H1 (cell line): ENCODE measurements at regions of chr3 and their contacts with region 1.

Region 1: DNA sequence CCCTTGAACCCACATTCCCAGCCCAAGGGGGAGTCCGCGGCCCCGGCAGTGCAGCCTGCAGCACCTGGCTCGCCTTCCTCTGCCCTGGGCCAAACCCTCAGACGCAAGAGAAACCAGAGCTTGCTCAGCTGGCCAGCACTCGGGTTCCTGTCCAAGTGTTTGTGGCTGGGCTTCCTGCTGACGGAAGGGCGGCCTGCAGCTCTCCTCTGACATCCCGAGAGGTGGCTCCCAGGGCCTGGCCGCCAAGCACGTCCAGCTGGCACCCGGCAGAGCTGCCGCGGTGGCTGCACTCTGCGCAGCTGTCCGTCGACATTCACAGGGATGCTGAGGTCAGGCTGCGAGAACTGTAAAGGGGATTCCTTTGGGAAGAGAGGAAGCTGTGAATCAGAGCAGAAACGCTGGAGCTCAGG is 85.6 kb downstream of the CPN2 start:
- DNase-seq: no peak
- H3K4me3 ChIP-seq: no peak overlapping the region
- H3K27ac ChIP-seq: no peak overlapping the region
- H3K4me1 ChIP-seq: peaks cover 0 to 9% (median 4%) of the 10 kb centered on the region in 4 experiments; a peak in 5 of 7 replicates
- H3K27me3 ChIP-seq: peaks cover 0 to 4% (median 1%) of the 10 kb centered on the region in 4 experiments; a peak in 2 of 7 replicates
- CTCF ChIP-seq: no peak
- EP300 ChIP-seq: no peak
- POLR2A ChIP-seq: no peak
- RAD21 ChIP-seq: no peak

Region 2: GRCh38 chr3:193788189-193788991 is 477.1 kb before region 1 on chr3:
- CTCF ChIA-PET with region 1: interaction called, 11 read pairs
- POLR2A ChIA-PET with region 1: no interaction called
- DNase-seq: peak in 1 of 2 experiments; percentile 71
- H3K4me3 ChIP-seq: no peak overlapping the region
- H3K27ac ChIP-seq: no peak overlapping the region
- H3K4me1 ChIP-seq: peaks cover 3 to 12% (median 9%) of the 10 kb centered on the region in 4 experiments
- H3K27me3 ChIP-seq: peaks cover 0 to 6% (median 0%) of the 10 kb centered on the region in 4 experiments; a peak in 2 of 7 replicates
- CTCF ChIP-seq: peak; percentile 85 to 96 (median 87)
- EP300 ChIP-seq: no peak
- POLR2A ChIP-seq: no peak
- RAD21 ChIP-seq: peak; percentile 96 to 99

Region 3: GRCh38 chr3:194166682-194167479 is 98.6 kb before region 1 on chr3:
- CTCF ChIA-PET with region 1: interaction called, 18 read pairs
- POLR2A ChIA-PET with region 1: no interaction called
- DNase-seq: no peak
- H3K4me3 ChIP-seq: no peak overlapping the region
- H3K27ac ChIP-seq: no peak overlapping the region
- H3K4me1 ChIP-seq: peaks cover 0 to 16% (median 4%) of the 10 kb centered on the region in 4 experiments; a peak in 4 of 7 replicates
- H3K27me3 ChIP-seq: no peaks in the 10 kb centered on the region; a peak in 1 of 7 replicates
- CTCF ChIP-seq: no peak
- EP300 ChIP-seq: no peak
- POLR2A ChIP-seq: no peak
- RAD21 ChIP-seq: no peak

Region 4: GRCh38 chr3:194194051-194194756 is 71.3 kb before region 1 on chr3:
- CTCF ChIA-PET with region 1: no interaction called
- POLR2A ChIA-PET with region 1: no interaction called
- DNase-seq: no peak
- H3K4me3 ChIP-seq: no peak overlapping the region
- H3K27ac ChIP-seq: no peak overlapping the region
- H3K4me1 ChIP-seq: no peaks in the 10 kb centered on the region
- H3K27me3 ChIP-seq: no peaks in the 10 kb centered on the region
- CTCF ChIP-seq: no peak
- EP300 ChIP-seq: no peak
- POLR2A ChIP-seq: no peak
- RAD21 ChIP-seq: no peak

Region 5: DNA sequence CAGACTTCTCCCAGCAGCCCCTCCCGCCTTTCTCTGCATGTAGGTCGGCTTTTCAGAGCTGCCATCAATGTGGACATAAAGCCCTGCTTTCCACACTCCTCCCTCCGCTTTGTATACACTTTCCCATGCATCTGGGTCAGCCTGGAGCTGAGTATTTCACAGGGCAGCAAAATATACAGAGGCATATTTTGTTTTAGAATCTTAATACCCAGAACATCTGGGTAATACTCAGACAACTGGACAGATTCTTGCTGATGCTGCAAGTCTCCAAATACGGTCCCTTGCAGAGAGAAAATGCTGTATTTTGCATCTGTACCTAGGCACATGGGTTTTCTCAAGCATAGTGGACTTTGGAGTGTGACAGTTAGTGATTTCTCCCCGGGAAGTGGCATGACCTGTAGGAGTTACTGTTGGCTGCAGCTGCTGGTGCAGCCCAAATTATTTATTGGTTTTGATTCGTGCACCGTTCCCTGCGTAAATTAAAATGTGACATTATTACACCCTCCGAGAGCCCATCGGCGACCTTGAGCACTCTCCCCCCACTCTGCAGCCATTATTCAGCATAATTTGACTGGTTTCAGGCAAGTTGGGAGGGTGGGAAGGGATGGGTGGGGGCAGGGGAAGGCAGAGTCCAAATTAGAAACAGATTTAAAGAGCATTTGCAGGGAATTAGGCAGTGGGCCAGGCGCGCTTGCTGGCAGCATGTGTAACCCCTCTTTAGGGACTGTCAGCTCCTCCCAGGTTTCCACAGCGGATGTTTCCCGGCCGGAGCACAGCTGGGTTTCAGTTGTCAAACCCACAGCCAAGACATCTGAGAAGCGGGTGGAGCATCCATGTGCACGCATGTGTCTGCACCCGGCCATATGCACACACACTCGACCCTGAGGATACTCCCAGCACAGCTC is 15.1 kb before region 1 on chr3:
- CTCF ChIA-PET with region 1: interaction called, 17 read pairs
- POLR2A ChIA-PET with region 1: no interaction called
- DNase-seq: peak in 1 of 2 experiments; percentile 33
- H3K4me3 ChIP-seq: no peak overlapping the region
- H3K27ac ChIP-seq: no peak overlapping the region
- H3K4me1 ChIP-seq: peaks cover 0 to 11% (median 4%) of the 10 kb centered on the region in 4 experiments; a peak in 4 of 7 replicates
- H3K27me3 ChIP-seq: no peaks in the 10 kb centered on the region
- CTCF ChIP-seq: no peak
- EP300 ChIP-seq: no peak
- POLR2A ChIP-seq: no peak
- RAD21 ChIP-seq: no peak

Region 6: DNA sequence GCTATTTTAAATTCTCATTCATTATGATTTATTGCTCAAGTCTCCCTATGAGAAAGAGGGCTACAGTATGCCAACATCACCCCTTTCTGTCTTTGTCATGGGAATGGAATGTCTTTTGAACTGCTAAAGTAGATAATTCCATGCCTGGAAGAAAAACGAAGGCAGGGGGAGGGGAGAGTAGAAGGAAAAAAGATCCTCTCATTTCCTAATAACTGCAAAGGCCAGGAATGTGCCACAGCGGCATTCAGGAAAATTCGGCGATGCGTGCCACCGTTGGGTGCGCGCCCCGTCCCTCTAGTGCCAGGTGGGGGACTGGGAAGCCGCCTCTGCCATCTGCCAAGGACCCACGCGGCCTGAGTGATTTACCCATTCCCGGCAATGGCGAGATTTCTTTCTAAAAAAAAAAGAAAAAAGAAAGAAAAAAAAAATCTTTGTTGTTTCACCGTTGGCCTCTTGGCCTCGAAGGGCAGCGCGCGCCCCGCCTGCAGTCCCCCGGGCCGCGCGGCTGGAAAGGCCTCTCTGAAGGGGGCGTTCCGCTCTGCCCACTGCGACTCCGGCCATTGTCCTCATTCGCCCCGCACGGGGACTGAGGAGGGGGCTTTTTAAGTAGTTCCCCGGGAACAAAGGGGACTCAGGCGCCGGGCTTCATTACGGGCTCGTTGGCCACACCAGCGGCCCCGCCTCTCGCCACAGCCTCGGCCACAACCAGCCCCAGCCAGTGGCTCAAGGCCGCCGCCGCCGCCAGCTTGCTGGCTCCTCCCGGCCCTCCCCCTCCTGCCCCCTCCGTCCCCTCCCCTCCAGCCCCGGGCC is 31.2 kb after region 1 on chr3:
- CTCF ChIA-PET with region 1: interaction called, 18 read pairs
- POLR2A ChIA-PET with region 1: interaction called, 5 read pairs
- DNase-seq: peak in 1 of 2 experiments; percentile 88
- H3K4me3 ChIP-seq: peak overlapping the region; percentile 22 to 55 (median 26); a peak in 6 of 8 replicates
- H3K27ac ChIP-seq: peak overlapping the region; percentile 82
- H3K4me1 ChIP-seq: peaks cover 17 to 33% (median 22%) of the 10 kb centered on the region in 4 experiments
- H3K27me3 ChIP-seq: peaks cover 0 to 3% (median 0%) of the 10 kb centered on the region in 4 experiments; a peak in 1 of 7 replicates
- CTCF ChIP-seq: no peak
- EP300 ChIP-seq: no peak; a peak in 1 of 3 replicates
- POLR2A ChIP-seq: peak; percentile 21 to 59
- RAD21 ChIP-seq: no peak